Breast epithelium (tissue), 4 donors: ENCODE measurements at regions of chr19 and their contacts with region 1.

Region 1: DNA sequence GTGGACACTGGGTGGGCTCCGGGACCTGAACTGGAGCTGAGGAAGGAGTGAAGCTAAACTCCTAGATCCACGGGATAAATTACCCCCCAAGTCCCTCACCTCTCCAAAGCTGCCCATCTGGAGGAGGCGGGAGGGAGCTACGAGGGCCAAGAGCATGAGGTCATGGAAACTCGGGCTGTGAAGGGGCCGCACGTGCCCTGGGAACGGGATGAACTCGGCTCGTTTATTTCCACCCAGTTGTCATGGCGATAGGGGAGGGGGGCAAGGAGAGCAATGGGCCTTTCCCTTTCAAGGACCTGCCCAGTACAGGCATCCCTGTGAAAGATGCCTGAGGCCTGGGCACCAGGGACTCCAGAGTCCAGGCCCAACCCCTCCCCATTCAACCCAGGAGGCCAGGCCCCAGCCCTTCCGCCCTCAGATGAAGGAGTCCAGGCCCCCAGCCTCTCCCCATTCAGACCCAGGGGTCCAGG is 3.8 kb downstream of the PPP1R12C start:
- DNase-seq: peak; percentile 76 to 78
- H3K4me3 ChIP-seq: peak overlapping the region in 2 of 3 donors; percentile 15 to 96
- H3K27ac ChIP-seq: peak overlapping the region; percentile 90 to 96
- H3K4me1 ChIP-seq: peaks cover 0 to 18% of the 10 kb centered on the region in 2 donors
- H3K27me3 ChIP-seq: no peaks in the 10 kb centered on the region
- CTCF ChIP-seq: no peak
- POLR2A ChIP-seq: no peak

Region 2: GRCh38 chr19:53580976-53581800 is 1532.4 kb before region 1 on chr19:
- intact Hi-C with region 1: loop called (anchors 5 kb)
- DNase-seq: no peak
- H3K4me3 ChIP-seq: no peak overlapping the region
- H3K27ac ChIP-seq: no peak overlapping the region
- H3K4me1 ChIP-seq: no peaks in the 10 kb centered on the region
- H3K27me3 ChIP-seq: no peaks in the 10 kb centered on the region
- CTCF ChIP-seq: no peak
- POLR2A ChIP-seq: no peak

Region 3: GRCh38 chr19:55141696-55142095 is 28.1 kb after region 1 on chr19:
- intact Hi-C with region 1: no loop called
- DNase-seq: no peak
- H3K4me3 ChIP-seq: no peak overlapping the region
- H3K27ac ChIP-seq: no peak overlapping the region
- H3K4me1 ChIP-seq: no peaks in the 10 kb centered on the region
- H3K27me3 ChIP-seq: peaks cover 7 to 66% of the 10 kb centered on the region in 2 donors
- CTCF ChIP-seq: no peak
- POLR2A ChIP-seq: no peak

Region 4: GRCh38 chr19:55173714-55174409 is 60.3 kb after region 1 on chr19:
- intact Hi-C with region 1: no loop called
- DNase-seq: no peak
- H3K4me3 ChIP-seq: peak overlapping the region; percentile 5 to 69 (median 43)
- H3K27ac ChIP-seq: no peak overlapping the region
- H3K4me1 ChIP-seq: peaks cover 0 to 3% of the 10 kb centered on the region in 2 donors
- H3K27me3 ChIP-seq: peaks cover 8 to 96% of the 10 kb centered on the region in 2 donors
- CTCF ChIP-seq: no peak
- POLR2A ChIP-seq: no peak